ENCODE measurements at regions of chr7 and their contacts with region 1.

Region 1: GRCh38 chr7:867672-868486 is 8.5 kb upstream of the GET4 start:
- DNase-seq: peak in 2 of 6 donors; percentile 37 to 64
- ATAC-seq: peak in 3 of 4 donors; percentile 52 to 65 (median 65)
- H3K4me3 ChIP-seq: no peak overlapping the region
- H3K27ac ChIP-seq: peak overlapping the region in 3 of 4 donors; percentile 5 to 46 (median 41)
- H3K4me1 ChIP-seq: no peaks in the 10 kb centered on the region
- H3K27me3 ChIP-seq: no peaks in the 10 kb centered on the region
- CTCF ChIP-seq: no peak

Region 2: GRCh38 chr7:786472-787255 is 81.2 kb before region 1 on chr7:
- intact Hi-C with region 1: loop called in 2 of 3 experiments (anchors 5 kb)
- DNase-seq: peak; percentile 47 to 90 (median 78)
- ATAC-seq: peak; percentile 74 to 97 (median 92)
- H3K4me3 ChIP-seq: no peak overlapping the region
- H3K27ac ChIP-seq: no peak overlapping the region
- H3K4me1 ChIP-seq: no peaks in the 10 kb centered on the region
- H3K27me3 ChIP-seq: no peaks in the 10 kb centered on the region
- CTCF ChIP-seq: peak; percentile 50 to 68 (median 62)